ENCODE measurements at regions of chr14 and their contacts with region 1.

Region 1: DNA sequence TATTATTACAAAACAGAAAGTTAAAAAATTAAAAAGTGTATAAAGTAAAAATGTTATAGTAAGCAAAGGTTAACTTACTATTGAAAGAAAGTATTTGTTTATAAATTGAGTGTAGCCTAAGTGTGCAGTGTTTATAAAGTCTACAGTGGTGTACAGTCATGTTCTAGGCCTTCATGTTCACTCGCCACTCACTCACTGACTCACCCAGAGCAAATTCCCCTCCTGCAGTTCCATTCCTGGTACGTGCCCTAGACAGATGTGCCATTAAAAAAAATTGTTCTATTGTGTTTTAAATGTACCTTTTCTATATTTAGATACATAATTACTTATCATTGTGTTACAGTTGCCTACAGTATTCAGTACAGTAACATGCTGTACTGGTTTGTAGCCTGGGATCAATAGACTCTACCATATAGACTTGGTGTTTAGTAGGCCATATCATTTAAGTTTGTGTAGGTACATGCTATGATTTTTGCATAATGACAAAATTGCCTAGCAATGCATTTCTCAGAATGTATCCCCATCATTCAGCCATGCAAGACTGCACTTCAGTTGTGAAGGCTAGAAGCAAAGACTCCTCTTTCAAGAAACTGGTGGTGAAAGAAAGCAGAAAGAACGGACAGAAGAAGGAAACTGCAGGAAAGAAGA is 100.6 kb downstream of the DACT1 start:
- DNase-seq: peak; percentile 16
- H3K4me3 Mint-ChIP-seq: no peak overlapping the region
- H3K27ac Mint-ChIP-seq: no peak overlapping the region
- H3K4me1 Mint-ChIP-seq: peaks cover 14% of the 10 kb centered on the region
- H3K27me3 Mint-ChIP-seq: peaks cover 8% of the 10 kb centered on the region

Region 2: DNA sequence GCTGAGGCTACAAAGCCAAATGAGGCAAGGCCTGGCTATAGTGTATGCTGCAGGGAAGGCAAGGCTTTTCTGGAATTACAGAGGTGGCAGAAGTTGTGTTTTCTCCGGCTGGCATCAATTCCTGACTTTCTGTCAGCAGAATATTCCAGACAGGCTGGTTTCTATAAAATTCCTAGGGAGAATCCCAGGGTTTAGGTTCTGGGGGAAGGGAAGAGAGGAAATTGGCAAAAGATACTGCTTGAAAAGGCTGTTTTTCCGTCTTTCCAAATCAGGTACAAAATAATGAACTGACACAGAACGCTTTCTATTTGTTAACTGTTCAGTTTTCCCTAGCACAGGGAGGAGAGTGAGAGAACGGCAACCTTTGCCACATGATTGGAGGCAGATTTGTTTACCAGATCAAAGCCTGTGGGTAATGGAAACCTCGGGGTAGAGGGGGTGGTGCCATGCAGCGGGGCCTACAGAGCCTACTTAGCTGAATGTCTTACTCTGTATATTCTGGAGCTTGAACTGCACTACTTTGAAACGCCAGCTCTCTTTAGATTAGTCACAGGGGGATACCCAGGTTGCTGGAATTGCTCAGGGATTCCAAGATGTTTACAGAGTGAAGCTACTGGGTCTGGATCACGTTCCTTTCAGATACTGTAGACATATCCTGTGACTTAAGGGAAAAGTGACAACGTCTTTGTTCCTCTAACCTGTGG is 166.4 kb before region 1 on chr14:
- CTCF ChIA-PET with region 1: no interaction called
- POLR2A ChIA-PET with region 1: no interaction called
- intact Hi-C with region 1: loop called (anchors 5 kb)
- DNase-seq: peak; percentile 77
- H3K4me3 Mint-ChIP-seq: peak overlapping the region; percentile 11
- H3K27ac Mint-ChIP-seq: peak overlapping the region; percentile 87
- H3K4me1 Mint-ChIP-seq: peaks cover 39% of the 10 kb centered on the region
- H3K27me3 Mint-ChIP-seq: no peaks in the 10 kb centered on the region

Region 3: GRCh38 chr14:58749066-58749669 is 10.9 kb after region 1 on chr14:
- CTCF ChIA-PET with region 1: interaction called, 4 read pairs
- POLR2A ChIA-PET with region 1: no interaction called
- intact Hi-C with region 1: loop called (anchors 1 kb)
- DNase-seq: peak; percentile 61
- H3K4me3 Mint-ChIP-seq: no peak overlapping the region
- H3K27ac Mint-ChIP-seq: no peak overlapping the region
- H3K4me1 Mint-ChIP-seq: peaks cover 8% of the 10 kb centered on the region
- H3K27me3 Mint-ChIP-seq: peaks cover 5% of the 10 kb centered on the region